GM13976 (cell line): ENCODE measurements at regions of chr1 and their contacts with region 1.

Region 1: GRCh38 chr1:51192213-51192843 is 43.7 kb upstream of the RNF11 start:
- DNase-seq: peak; percentile 55
- CTCF ChIP-seq: peak; percentile 80

Region 2: GRCh38 chr1:50774759-50775351 is 417.5 kb before region 1 on chr1:
- in situ Hi-C with region 1: loop called (anchors 10 kb)
- DNase-seq: peak; percentile 31
- CTCF ChIP-seq: peak; percentile 65

Region 3: GRCh38 chr1:50873458-50874187 is 318.7 kb before region 1 on chr1:
- in situ Hi-C with region 1: loop called (anchors 10 kb)
- DNase-seq: peak; percentile 63
- CTCF ChIP-seq: peak; percentile 74

Region 4: GRCh38 chr1:51693419-51694155 is 501.3 kb after region 1 on chr1:
- in situ Hi-C with region 1: no loop called
- DNase-seq: no peak
- CTCF ChIP-seq: no peak